ENCODE measurements at regions of chr7 and their contacts with region 1.

Region 1: DNA sequence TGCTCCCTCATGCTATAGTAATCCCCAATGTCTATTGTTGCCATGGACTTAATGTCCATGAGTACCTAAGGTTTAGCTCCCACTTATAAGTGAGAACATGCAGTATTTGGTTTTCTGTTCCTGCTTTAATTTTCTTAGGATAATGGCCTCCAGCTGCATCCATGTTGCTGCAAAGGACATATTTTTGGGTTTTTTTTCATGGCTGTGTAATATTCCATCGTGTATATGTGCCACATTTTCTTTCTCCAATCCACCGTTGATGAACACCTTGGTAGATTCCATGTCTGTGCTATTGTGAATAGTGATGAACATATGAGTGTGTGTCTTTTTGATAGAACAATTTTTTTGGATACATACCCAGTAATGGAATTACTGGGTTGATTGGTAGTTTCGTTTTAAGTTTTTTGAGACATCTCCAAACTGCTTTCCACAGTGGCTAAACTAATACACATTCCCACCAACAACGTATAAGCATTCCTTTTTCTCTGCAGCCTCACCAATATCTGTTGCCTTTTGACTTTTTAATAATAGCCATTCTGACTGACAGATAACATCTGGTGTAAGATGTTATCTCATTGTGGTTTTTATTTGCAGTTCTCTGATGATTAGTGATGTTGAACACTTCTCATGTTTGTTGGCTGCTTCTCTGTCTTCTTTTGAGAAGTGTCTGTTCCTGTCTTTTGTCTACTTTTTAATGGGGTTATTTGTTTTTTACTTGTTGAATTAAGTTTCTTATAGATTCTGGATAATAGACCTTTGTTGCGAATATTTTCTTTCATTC is 68.8 kb upstream of the IFRD1 start:
- DNase-seq: no peak
- ATAC-seq: no peak

Region 2: GRCh38 chr7:112206238-112207044 is 175.1 kb before region 1 on chr7 and contains the starts of genes DOCK4 and ZNF277:
- intact Hi-C with region 1: no loop called
- DNase-seq: peak; percentile 100
- ATAC-seq: peak; percentile 98
- total RNA-seq, gene DOCK4: 51.2 TPM
- total RNA-seq, gene ZNF277: 24.0 TPM

Region 3: GRCh38 chr7:112411186-112411795 is 29.8 kb after region 1 on chr7:
- intact Hi-C with region 1: loop called (anchors 1 kb)
- DNase-seq: no peak
- ATAC-seq: peak; percentile 87

Measured in sciatic nerve (tissue), 2 donors.